ENCODE measurements at regions of chr10 and their contacts with region 1.

Region 1: DNA sequence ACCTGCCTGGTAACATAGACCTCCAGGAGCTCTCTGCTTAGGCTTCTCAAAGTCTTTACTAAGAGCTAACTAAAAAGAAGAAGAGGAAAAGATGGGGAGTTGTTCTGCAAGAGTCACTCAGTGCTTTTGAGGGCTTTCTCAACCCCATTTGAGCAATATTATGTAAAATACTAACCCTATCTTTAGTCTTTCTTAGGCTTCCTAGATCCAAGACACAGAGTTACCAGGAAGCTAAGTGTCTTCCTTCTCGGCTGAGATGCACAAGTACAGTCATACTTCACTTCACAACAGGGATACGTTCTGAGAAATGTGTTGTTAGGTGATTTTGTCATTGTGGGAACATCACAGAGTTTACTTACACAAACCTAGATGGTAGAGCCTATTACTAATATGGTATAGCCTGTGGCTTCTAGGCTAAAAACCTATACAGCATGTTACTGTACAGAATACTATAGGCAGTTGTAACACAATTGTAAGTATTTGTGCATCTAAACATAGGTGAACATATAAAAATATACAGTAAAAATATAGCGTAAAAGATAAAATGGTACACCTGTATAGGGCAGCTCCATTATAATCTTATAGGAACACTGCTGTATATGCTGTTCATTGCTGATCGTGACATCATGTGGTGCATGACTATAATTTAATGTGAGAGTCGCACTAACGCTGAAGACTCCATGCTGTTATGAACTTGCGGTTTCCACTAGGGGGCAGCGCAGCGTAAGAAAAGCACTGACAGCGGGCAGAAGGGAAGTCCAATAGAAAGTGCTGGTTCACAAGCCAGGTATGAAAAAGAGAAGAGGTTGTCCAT is 16.3 kb downstream of the ANKRD22 start:
- DNase-seq: peak; percentile 90
- H3K4me3 ChIP-seq: no peak overlapping the region
- H3K27ac ChIP-seq: no peak overlapping the region
- H3K4me1 ChIP-seq: no peaks in the 10 kb centered on the region
- H3K27me3 ChIP-seq: no peaks in the 10 kb centered on the region

Region 2: DNA sequence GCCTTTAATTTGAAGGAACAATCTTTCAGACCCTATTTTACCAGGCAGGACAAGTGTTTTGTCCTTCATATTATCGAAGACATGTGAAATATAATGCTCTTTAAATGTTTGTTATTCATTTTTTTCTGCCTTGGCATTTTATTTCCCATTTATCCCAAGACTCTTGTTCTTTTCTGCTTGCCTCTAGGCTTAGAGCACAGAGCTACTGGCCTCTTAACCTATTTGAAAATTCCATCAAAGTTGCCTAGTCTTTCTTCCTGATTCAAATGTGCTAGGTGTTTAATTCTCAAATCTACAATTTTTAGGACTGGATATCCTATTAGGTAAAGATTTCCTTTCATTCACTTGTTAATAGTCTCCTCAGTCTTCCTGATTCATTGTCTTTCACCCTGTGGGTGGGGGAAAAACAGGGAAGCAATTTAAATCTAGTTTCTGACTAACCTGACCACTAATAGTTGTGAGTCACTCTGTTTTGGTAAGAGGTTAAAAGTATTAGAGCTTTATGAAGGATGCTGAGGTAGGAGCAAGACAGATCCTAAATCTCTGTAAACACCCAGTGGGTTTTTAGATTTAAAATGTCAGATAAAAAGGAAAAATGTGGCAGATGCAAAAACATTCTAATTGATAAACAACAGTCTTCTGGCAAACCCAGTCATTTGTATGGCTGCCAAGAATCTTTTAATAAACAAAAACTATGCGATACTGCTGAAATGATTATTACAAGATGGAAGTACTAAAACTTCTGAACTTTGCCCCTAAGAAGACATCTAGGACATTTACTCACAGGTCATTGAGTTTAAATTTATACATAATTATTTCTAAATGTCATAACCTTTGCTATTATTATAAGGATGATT is 127.6 kb before region 1 on chr10:
- in situ Hi-C with region 1: no loop called
- DNase-seq: peak; percentile 86
- H3K4me3 ChIP-seq: no peak overlapping the region
- H3K27ac ChIP-seq: no peak overlapping the region
- H3K4me1 ChIP-seq: peaks cover 12% of the 10 kb centered on the region
- H3K27me3 ChIP-seq: peaks cover 19% of the 10 kb centered on the region

Region 3: GRCh38 chr10:89217057-89217990 is 382.0 kb after region 1 on chr10:
- in situ Hi-C with region 1: loop called (anchors 10 kb)
- DNase-seq: peak; percentile 72
- H3K4me3 ChIP-seq: 0 out of 2 replicates have a peak overlapping the region, but pooled peaks have one; percentile 5
- H3K27ac ChIP-seq: peak overlapping the region; percentile 27; the same call in 1 of the 2 replicates
- H3K4me1 ChIP-seq: peaks cover 27% of the 10 kb centered on the region
- H3K27me3 ChIP-seq: no peaks in the 10 kb centered on the region